Mammary epithelial cell (primary cell): ENCODE measurements at regions of chr9 and their contacts with region 1.

Region 1: DNA sequence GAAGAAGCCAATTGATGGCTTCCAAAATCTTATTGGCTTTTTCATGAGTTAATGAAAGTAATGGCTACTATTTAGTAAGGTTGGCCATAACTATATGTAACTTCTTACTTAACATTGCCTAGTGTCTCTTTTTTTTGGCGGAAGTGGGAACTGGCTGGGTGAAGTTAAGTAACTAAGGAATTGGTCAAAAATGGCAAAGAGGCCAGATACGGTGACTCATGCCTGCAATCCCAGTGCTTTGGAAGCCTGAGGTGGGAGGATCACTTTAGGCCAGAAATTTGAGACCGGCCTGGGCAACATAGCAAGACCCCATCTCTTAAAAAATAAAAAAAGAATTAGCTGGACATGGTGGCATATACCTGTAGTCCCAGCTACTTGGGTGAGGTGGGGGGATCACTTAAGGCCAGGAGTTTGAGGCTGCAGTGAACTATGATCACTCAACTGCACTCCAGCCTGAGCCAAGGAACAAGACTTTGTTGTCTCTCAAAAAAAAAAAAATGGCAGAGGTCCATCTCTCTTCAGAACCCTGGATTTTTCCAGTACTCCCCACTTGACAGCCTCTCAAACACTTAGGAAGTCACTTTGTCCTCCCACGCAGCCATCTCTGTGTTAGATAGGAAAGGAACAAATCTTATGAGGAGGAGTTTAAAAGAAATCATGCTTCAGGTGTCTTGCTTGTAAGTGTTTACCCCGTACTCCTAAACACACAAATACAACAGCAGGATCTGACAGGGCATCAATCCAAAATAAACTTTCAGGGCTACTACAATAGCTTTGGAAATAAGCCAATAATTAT is 75.7 kb downstream of the TEK start:
- DNase-seq: no peak
- H3K4me3 ChIP-seq: no peak overlapping the region
- H3K27ac ChIP-seq: no peak overlapping the region
- H3K4me1 ChIP-seq: peaks cover 29% of the 10 kb centered on the region
- H3K27me3 ChIP-seq: no peaks in the 10 kb centered on the region
- CTCF ChIP-seq: no peak

Region 2: DNA sequence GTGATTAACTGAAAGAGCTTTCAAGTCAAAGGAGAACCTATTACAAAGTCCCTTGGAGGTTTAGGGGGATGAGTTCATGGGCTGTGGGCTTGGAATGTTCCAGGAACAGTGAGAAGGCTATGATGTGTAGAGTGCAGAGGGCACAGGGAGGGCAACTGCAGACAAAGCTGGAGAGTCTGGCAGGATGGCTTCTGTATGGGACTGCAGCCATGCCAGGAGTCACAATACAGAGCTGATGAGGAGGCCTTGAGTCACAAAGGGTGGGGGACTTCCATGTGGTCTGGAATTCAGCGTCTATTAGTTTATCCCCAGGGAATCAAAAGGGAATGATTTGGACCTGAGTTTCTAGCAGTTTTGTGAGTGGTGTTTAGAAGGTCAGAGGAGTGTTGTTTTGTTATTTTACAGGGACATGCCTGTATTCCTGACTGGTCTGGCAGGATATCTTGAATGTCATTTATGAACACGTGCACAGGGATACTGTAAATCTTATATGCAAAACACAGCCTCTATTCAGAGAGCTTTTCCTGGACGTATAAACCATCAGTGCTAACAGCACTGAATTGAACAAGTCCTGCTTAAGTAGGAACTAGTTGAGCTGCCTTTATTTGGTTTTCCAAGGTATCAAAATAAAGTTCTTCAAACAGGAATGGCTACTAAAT is 90.0 kb before region 1 on chr9:
- CTCF ChIA-PET with region 1: no interaction called
- dilution Hi-C with region 1: no loop called
- in situ Hi-C with region 1: no loop called
- intact Hi-C with region 1: loop called (anchors 10 kb)
- DNase-seq: peak; percentile 67
- H3K4me3 ChIP-seq: no peak overlapping the region
- H3K27ac ChIP-seq: peak overlapping the region; percentile 3
- H3K4me1 ChIP-seq: peaks cover 10% of the 10 kb centered on the region
- H3K27me3 ChIP-seq: no peaks in the 10 kb centered on the region
- CTCF ChIP-seq: no peak

Region 3: GRCh38 chr9:27151693-27152402 is 32.9 kb before region 1 on chr9:
- CTCF ChIA-PET with region 1: no interaction called
- dilution Hi-C with region 1: no loop called
- in situ Hi-C with region 1: no loop called
- intact Hi-C with region 1: loop called (anchors 1 kb)
- DNase-seq: peak; percentile 30
- H3K4me3 ChIP-seq: no peak overlapping the region
- H3K27ac ChIP-seq: no peak overlapping the region
- H3K4me1 ChIP-seq: peaks cover 28% of the 10 kb centered on the region
- H3K27me3 ChIP-seq: no peaks in the 10 kb centered on the region
- CTCF ChIP-seq: no peak

Region 4: DNA sequence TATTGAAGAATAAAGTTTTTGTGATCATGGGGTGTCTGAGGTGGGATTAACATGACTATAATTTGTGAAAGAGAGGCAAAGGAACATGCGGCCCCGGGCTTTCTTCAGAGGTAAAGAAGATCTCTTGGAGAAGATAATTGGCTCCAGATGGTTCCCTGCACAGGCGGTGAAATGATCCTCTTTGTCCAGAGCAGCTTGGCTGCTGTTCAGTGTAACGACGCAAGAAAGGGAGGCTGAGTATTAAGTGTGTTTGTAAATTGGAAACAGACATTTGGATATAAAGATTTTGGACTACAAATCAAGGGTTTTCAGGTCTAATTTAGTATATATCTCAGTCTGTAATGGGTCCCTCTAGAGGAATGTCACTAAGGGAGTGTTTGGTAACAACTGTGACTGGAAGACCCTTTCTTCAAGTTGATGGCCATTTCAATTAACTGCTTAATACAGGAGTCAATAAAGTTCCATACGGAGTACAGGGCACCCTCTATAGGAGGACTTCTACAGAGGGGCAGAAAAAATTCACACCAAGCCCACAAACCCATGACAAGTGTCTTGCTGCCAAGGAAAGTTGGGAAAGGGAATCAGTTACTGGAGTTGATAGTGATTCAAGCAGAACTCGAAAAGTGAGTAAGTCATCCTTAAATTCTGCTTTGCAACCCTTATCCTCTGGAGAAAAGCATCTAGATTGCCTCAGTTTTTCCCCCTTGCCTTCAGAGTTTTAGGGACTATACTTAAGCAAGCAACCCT is 108.1 kb after region 1 on chr9:
- CTCF ChIA-PET with region 1: no interaction called
- dilution Hi-C with region 1: no loop called
- in situ Hi-C with region 1: no loop called
- intact Hi-C with region 1: no loop called
- DNase-seq: no peak
- H3K4me3 ChIP-seq: no peak overlapping the region
- H3K27ac ChIP-seq: no peak overlapping the region
- H3K4me1 ChIP-seq: no peaks in the 10 kb centered on the region
- H3K27me3 ChIP-seq: no peaks in the 10 kb centered on the region
- CTCF ChIP-seq: no peak